B cell (primary cell): ENCODE measurements at regions of chr19 and their contacts with region 1.

Region 1: GRCh38 chr19:34171877-34172660 is at the start of gene LSM14A:
- DNase-seq: peak; percentile 97
- ATAC-seq: peak; percentile 78
- H3K4me3 ChIP-seq: peak within 1 kb of the TSS; percentile 83 to 96 (median 92)
- H3K4me3 Mint-ChIP-seq: peak within 1 kb of the TSS; percentile 97
- H3K27ac ChIP-seq: peak within 1 kb of the TSS; percentile 94 to 99
- H3K27ac Mint-ChIP-seq: peak within 1 kb of the TSS; percentile 98
- H3K4me1 ChIP-seq: peaks cover 52 to 57% of the 10 kb centered on the region in 2 donors
- H3K4me1 Mint-ChIP-seq: peaks cover 48% of the 10 kb centered on the region
- H3K27me3 ChIP-seq: no peaks in the 10 kb centered on the region
- H3K27me3 Mint-ChIP-seq: no peaks in the 10 kb centered on the region
- CTCF ChIP-seq: no peak
- total RNA-seq, gene LSM14A: 139 and 163 TPM in 2 replicates

Region 2: DNA sequence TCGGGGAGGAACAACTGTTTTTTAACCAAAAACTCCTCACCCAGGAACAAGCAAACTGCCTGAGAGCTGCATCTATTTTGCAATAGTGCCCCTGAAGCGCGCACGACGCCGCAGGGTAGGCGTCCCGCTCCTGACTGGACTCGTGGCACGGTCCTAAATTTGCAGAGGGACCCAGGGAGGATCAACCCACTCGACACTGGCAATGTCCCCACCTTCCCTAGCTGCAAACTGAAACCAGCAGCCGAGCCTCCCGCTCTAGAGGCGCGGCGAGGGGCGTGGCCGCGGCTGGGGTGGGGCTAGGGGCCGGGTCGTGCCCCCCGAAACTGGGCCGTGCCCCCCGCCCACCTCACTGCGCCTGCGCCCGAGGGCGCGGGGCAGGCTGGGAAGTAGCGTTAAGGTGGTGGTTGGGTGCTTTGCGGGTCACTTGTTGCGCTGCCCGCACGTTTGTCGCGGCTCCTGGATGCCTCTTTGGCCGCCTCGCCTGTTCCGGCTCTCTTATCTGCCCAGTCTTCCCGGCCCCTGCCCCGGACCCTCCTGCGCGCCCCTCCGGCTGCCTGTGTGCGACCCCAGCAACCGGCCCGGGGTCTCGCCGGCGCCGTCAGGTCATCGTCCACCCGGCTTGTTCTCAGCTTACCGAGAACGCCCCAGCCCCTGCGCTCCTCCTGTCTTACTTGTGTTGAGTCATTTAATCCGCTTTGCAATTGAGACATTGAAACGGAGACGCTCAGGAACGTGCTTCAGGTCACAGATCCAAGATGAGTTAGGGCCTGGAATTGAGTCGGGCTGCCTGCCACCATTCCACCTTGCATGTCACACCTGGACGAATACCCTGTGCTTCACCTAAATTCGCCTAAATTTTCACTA is 37.6 kb before region 1 on chr19:
- CTCF ChIA-PET with region 1: no interaction called
- POLR2A ChIA-PET with region 1: interaction called, 7 read pairs
- intact Hi-C with region 1: loop called (anchors 1 kb)
- DNase-seq: peak; percentile 93
- ATAC-seq: peak; percentile 97
- H3K4me3 ChIP-seq: peak overlapping the region; percentile 65 to 95 (median 80)
- H3K4me3 Mint-ChIP-seq: peak overlapping the region; percentile 97
- H3K27ac ChIP-seq: peak overlapping the region; percentile 59 to 86
- H3K27ac Mint-ChIP-seq: peak overlapping the region; percentile 94
- H3K4me1 ChIP-seq: peaks cover 3 to 8% of the 10 kb centered on the region in 2 donors
- H3K4me1 Mint-ChIP-seq: peaks cover 14% of the 10 kb centered on the region
- H3K27me3 ChIP-seq: no peaks in the 10 kb centered on the region
- H3K27me3 Mint-ChIP-seq: peaks cover 4% of the 10 kb centered on the region
- CTCF ChIP-seq: no peak

Region 3: DNA sequence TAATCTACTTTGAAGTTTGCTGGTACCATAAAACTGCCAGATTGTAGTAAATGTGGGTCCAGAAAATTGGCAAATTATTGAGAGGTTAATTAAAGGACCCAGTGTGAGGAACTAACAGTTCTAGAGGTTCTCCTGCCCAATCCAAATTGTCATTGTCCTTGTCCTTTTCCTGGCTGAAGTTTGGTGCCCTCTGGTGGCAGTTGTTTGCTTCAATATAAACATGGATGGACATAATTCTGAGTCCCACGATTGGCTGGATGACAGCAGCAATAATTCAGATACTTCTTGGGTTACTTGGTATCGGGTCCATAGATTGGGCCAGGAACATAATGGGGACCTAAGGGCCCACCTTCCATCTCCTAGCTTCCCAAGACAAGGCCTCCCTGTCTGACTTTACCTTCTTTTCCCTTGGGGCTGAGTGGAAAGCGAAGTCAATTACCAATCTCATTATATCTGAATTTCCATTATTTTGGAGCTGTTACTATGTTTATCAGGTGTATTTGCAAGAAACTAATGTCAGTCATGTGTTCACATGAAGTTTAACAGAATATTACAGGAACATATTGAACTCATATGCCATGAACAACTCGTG is 48.5 kb after region 1 on chr19:
- CTCF ChIA-PET with region 1: interaction called, 12 read pairs
- POLR2A ChIA-PET with region 1: no interaction called
- intact Hi-C with region 1: loop called (anchors 1 kb)
- DNase-seq: peak; percentile 75
- ATAC-seq: peak; percentile 42
- H3K4me3 ChIP-seq: no peak overlapping the region
- H3K4me3 Mint-ChIP-seq: no peak overlapping the region
- H3K27ac ChIP-seq: no peak overlapping the region
- H3K27ac Mint-ChIP-seq: peak overlapping the region; percentile 72
- H3K4me1 ChIP-seq: peaks cover 22 to 24% of the 10 kb centered on the region in 2 donors
- H3K4me1 Mint-ChIP-seq: peaks cover 32% of the 10 kb centered on the region
- H3K27me3 ChIP-seq: no peaks in the 10 kb centered on the region
- H3K27me3 Mint-ChIP-seq: no peaks in the 10 kb centered on the region
- CTCF ChIP-seq: peak; percentile 86

Region 4: DNA sequence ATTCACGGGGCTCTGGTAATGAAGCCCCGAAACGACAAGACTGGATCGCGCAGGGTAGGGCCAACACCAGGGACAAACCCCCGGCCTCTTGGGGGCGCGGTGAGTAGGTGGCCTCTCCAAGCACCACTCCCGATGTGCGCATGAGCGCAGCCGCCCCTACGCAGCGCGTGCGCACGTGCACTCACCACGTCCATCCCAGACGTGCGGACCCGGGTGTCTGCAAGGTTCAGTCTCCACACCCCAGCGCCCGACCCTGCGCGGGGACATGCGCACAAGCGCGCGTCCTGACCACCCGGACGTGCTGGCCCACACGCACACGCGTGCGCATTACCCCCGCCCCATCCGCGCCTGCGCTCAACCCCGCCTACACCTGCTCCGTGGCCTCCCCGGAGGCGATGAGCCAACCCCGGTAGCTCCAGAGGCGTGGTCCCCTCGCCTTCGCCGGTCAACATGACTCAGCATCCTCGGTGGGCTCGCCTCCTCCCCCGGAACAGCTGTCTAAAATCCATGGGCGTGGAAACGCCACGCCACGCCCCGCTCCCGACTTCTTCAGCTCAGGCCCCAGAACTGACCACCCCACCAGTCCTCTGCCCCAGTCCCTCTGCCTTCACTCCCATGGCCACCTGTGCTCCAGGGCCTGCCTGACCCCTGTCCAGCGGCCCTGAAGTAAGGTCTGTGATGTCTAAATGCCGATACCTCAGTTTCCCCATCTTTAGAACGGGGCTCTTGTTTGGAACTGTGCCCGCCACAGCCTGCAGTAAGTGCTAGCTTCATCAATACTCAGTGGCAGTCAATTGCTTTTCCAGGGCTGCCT is 187.3 kb after region 1 on chr19:
- CTCF ChIA-PET with region 1: no interaction called
- POLR2A ChIA-PET with region 1: interaction called, 3 read pairs
- intact Hi-C with region 1: loop called (anchors 1 kb)
- DNase-seq: peak; percentile 96
- ATAC-seq: peak; percentile 92
- H3K4me3 ChIP-seq: peak overlapping the region; percentile 54 to 67 (median 56)
- H3K4me3 Mint-ChIP-seq: peak overlapping the region; percentile 96
- H3K27ac ChIP-seq: peak overlapping the region; percentile 59 to 68
- H3K27ac Mint-ChIP-seq: peak overlapping the region; percentile 97
- H3K4me1 ChIP-seq: peaks cover 12 to 20% of the 10 kb centered on the region in 2 donors
- H3K4me1 Mint-ChIP-seq: peaks cover 26% of the 10 kb centered on the region
- H3K27me3 ChIP-seq: no peaks in the 10 kb centered on the region
- H3K27me3 Mint-ChIP-seq: no peaks in the 10 kb centered on the region
- CTCF ChIP-seq: peak; percentile 66

Region 5: DNA sequence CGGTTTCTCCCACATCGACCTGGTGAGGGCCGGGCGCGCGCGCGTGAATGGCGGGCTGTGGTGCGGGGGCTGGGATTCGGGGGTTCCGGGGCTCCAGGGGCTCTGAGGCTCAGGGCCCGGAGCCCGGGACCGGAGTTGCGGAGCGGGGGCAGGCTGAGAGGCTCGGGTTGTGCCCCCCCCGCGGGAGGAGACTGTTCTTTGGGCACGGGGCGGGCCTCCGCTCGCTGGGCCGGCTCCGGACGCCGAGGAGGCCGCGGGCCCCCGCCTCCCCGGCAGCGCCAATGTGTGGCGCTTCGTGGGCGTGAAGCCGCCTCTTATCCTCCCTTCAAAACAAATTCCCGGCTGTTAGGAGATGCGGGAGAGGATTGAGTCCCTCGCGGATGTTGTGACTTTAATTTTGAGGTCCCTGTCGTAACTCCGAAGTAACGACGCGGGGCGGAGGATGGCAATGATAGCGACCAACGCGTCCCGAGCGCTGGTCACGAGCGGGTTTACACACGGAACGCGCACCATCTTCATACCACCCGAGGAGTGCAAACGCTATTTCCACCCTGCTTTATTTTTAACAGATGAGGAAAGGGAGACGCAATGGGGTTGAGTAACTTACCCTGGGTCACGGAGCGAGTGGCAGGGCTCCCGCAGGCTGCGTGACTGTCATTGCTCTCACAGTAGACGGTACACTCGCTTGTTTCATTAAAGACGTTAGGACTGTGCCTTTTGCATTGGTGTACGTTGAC is 256.6 kb after region 1 on chr19:
- CTCF ChIA-PET with region 1: no interaction called
- POLR2A ChIA-PET with region 1: no interaction called
- intact Hi-C with region 1: loop called (anchors 2 kb)
- DNase-seq: no peak
- ATAC-seq: peak; percentile 37
- H3K4me3 ChIP-seq: peak overlapping the region; percentile 70 to 93 (median 78)
- H3K4me3 Mint-ChIP-seq: peak overlapping the region; percentile 98
- H3K27ac ChIP-seq: peak overlapping the region; percentile 65 to 90
- H3K27ac Mint-ChIP-seq: peak overlapping the region; percentile 96
- H3K4me1 ChIP-seq: peaks cover 22 to 24% of the 10 kb centered on the region in 2 donors
- H3K4me1 Mint-ChIP-seq: peaks cover 37% of the 10 kb centered on the region
- H3K27me3 ChIP-seq: no peaks in the 10 kb centered on the region
- H3K27me3 Mint-ChIP-seq: no peaks in the 10 kb centered on the region
- CTCF ChIP-seq: no peak

Region 6: GRCh38 chr19:34480971-34481821 is 309.1 kb after region 1 on chr19 and contains the start of gene WTIP:
- CTCF ChIA-PET with region 1: no interaction called
- POLR2A ChIA-PET with region 1: no interaction called
- intact Hi-C with region 1: no loop called
- DNase-seq: no peak
- ATAC-seq: no peak
- H3K4me3 ChIP-seq: no peak within 1 kb of the TSS
- H3K4me3 Mint-ChIP-seq: peak within 1 kb of the TSS; percentile 56
- H3K27ac ChIP-seq: no peak within 1 kb of the TSS
- H3K27ac Mint-ChIP-seq: no peak within 1 kb of the TSS
- H3K4me1 ChIP-seq: peaks cover 0 to 3% of the 10 kb centered on the region in 2 donors
- H3K4me1 Mint-ChIP-seq: peaks cover 6% of the 10 kb centered on the region
- H3K27me3 ChIP-seq: peaks cover 0 to 31% (median 8%) of the 10 kb centered on the region in 4 experiments
- H3K27me3 Mint-ChIP-seq: peaks cover 40% of the 10 kb centered on the region
- CTCF ChIP-seq: no peak
- total RNA-seq, gene WTIP: 0.15 and 0.30 TPM in 2 replicates